ENCODE measurements at regions of chr15 and their contacts with region 1.

Region 1: DNA sequence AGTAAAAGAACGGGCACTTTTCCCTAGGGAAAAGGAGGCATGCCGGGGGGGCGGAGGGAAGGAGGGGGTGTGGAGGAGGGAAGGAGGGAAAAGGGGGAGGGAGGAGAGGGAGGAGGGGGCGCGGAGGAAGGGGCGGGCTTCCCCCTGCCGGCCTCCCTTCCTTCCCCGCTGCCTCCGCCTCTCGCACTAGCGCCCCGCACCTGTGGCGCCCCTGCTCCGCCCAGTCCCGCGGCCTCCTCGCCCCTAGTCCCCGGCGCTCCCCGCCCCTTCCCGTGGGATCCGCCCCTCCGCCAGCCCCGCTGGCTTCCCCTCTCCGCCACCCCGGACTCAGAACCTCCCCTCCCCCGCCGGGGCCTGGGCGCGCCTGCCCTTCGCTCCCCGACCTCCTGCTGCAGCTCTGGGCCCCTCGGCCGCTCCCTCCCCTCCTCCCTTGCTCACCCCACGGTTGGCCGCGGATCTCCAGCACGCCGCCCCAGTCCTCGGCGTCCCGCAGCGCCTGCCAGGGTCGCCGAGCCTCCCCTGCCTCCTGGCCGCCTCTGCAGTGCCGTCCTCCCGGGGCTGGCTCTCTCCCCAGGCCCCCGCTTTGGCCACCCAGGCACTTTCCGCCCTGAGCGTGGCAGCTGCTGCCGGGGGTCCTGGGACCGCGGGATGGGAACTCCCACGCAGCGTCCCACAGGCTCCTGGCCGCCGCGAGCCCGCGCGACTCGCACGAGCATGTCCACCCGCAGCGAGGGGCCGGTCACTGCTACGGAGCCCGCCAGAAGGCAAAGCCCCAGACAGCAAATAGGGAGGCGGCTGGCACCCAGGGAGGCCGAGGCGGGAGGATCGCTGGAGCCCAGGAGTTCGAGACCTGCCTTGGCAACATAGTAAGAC is 147.4 kb downstream of the TJP1 start:
- DNase-seq: peak; percentile 79 to 87
- ATAC-seq: peak; percentile 57
- H3K4me3 ChIP-seq: peak overlapping the region; percentile 57 to 65
- H3K27ac ChIP-seq: no peak overlapping the region
- H3K4me1 ChIP-seq: peaks cover 0 to 4% of the 10 kb centered on the region in 2 donors
- H3K27me3 ChIP-seq: no peaks in the 10 kb centered on the region

Region 2: GRCh38 chr15:29656636-29657475 is 18.0 kb before region 1 on chr15:
- intact Hi-C with region 1: no loop called
- DNase-seq: no peak
- ATAC-seq: no peak
- H3K4me3 ChIP-seq: no peak overlapping the region
- H3K27ac ChIP-seq: no peak overlapping the region
- H3K4me1 ChIP-seq: no peaks in the 10 kb centered on the region
- H3K27me3 ChIP-seq: no peaks in the 10 kb centered on the region

Region 3: DNA sequence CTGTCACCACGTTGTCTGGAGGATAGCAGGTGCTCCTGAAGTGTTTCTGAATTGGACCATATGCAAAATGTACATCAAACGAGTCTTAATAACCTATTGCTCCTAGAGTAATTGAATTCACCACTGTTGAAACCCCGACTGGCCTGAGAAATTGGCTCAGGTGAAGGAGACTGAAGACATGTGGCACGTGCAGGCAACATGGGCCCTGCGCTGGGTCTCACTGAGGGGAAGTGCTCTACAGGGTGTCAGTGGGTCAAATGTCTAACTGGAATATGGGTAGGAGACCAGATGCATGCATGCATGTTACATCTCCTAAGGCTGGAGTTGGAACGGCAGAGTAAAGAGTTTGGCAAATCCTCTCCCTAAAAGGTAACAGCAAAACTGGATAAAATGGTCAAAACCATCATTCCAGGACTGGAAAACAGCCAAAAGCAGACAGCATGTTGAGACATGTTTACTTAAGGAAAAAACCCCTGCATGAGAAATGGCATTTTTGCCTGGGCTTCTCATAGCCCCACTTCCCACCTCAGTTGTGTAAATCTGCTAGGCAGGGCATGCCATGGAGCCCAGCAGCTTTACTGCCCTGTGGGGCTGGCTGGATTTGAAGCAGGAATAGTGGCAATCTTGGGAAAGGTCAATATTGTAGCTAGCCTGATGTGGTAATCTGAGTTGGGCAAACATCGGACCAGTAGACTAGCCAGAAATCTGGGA is 16.0 kb after region 1 on chr15:
- intact Hi-C with region 1: loop called in 1 of 2 experiments (anchors 1 kb)
- DNase-seq: no peak
- ATAC-seq: no peak
- H3K4me3 ChIP-seq: no peak overlapping the region
- H3K27ac ChIP-seq: no peak overlapping the region
- H3K4me1 ChIP-seq: no peaks in the 10 kb centered on the region
- H3K27me3 ChIP-seq: no peaks in the 10 kb centered on the region

Region 4: GRCh38 chr15:29701151-29701550 is 26.3 kb after region 1 on chr15:
- intact Hi-C with region 1: no loop called
- DNase-seq: no peak
- ATAC-seq: no peak
- H3K4me3 ChIP-seq: no peak overlapping the region
- H3K27ac ChIP-seq: no peak overlapping the region
- H3K4me1 ChIP-seq: no peaks in the 10 kb centered on the region
- H3K27me3 ChIP-seq: no peaks in the 10 kb centered on the region

Region 5: GRCh38 chr15:29821416-29822131 is 146.7 kb after region 1 on chr15:
- intact Hi-C with region 1: loop called in 1 of 2 experiments (anchors 5 kb)
- DNase-seq: peak; percentile 77 to 90
- ATAC-seq: peak; percentile 65
- H3K4me3 ChIP-seq: peak overlapping the region; percentile 91 to 93
- H3K27ac ChIP-seq: peak overlapping the region; percentile 62 to 90
- H3K4me1 ChIP-seq: no peaks in the 10 kb centered on the region
- H3K27me3 ChIP-seq: no peaks in the 10 kb centered on the region